Endothelial cell of umbilical vein (primary cell): ENCODE measurements at regions of chr15 and their contacts with region 1.

Region 1: GRCh38 chr15:100721770-100722550 is 119.6 kb downstream of the ASB7 start:
- DNase-seq: peak; percentile 96
- H3K4me3 ChIP-seq: no peak overlapping the region
- H3K27ac ChIP-seq: peak overlapping the region; percentile 82
- H3K4me1 ChIP-seq: peaks cover 27% of the 10 kb centered on the region
- H3K27me3 ChIP-seq: no peaks in the 10 kb centered on the region
- CTCF ChIP-seq: no peak
- POLR2A ChIP-seq: no peak

Region 2: DNA sequence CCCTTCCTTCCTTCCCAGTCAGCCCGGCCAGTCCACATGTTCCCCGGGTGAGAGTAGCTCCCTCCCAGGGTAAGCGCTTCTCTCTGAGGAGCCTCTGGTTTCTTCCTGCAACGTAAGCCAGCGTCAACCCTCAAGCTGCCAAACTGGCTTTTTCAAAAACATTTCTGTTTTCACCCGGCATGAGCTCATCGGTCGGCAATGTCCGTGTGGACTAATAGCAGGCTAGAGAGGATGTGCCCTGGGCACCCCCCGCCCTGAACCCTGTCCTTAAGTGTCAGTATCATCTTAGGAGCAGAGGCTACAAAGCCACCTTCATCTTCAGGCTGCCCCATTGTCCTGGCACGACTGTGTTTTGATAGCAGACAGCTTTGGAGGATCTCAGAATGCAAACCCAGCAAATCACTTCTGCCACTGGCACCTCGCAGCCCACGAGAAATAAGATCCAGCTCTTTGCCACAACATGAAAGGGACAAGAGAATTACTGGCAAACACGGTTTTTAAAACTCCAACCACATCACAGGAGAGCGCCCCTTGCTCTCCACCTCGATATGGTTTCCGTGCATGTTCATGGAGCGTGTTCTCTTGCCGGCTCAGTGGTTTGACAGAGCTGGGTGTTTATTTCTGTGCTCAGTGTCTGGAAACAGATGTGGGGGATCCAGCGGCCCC is 167.6 kb after region 1 on chr15:
- CTCF ChIA-PET with region 1: no interaction called
- POLR2A ChIA-PET with region 1: no interaction called
- dilution Hi-C with region 1: no loop called
- intact Hi-C with region 1: loop called (anchors 1 kb)
- DNase-seq: peak; percentile 85
- H3K4me3 ChIP-seq: peak overlapping the region in 1 of 3 experiments; percentile 3
- H3K27ac ChIP-seq: peak overlapping the region; percentile 43
- H3K4me1 ChIP-seq: peaks cover 35% of the 10 kb centered on the region
- H3K27me3 ChIP-seq: no peaks in the 10 kb centered on the region
- CTCF ChIP-seq: no peak
- POLR2A ChIP-seq: peak; percentile 50

Region 3: GRCh38 chr15:101613130-101614000 is 891.4 kb after region 1 on chr15:
- CTCF ChIA-PET with region 1: no interaction called
- POLR2A ChIA-PET with region 1: no interaction called
- dilution Hi-C with region 1: no loop called
- intact Hi-C with region 1: no loop called
- DNase-seq: no peak
- H3K4me3 ChIP-seq: no peak overlapping the region
- H3K27ac ChIP-seq: no peak overlapping the region
- H3K4me1 ChIP-seq: no peaks in the 10 kb centered on the region
- H3K27me3 ChIP-seq: no peaks in the 10 kb centered on the region
- CTCF ChIP-seq: no peak
- POLR2A ChIP-seq: no peak